Right cardiac atrium (tissue), 5 donors: ENCODE measurements at regions of chr6 and their contacts with region 1.

Region 1: GRCh38 chr6:18503593-18504231 is 116.6 kb downstream of the RNF144B start:
- DNase-seq: peak in 2 of 3 donors; percentile 26 to 71
- ATAC-seq: peak; percentile 88 to 89
- H3K4me3 ChIP-seq: peak overlapping the region; percentile 42
- H3K27ac ChIP-seq: peak overlapping the region; percentile 12
- H3K4me1 ChIP-seq: peaks cover 3% of the 10 kb centered on the region
- H3K27me3 ChIP-seq: no peaks in the 10 kb centered on the region

Region 2: GRCh38 chr6:18323935-18324705 is 179.6 kb before region 1 on chr6:
- intact Hi-C with region 1: loop called (anchors 2 to 5 kb)
- DNase-seq: no peak
- ATAC-seq: peak; percentile 64 to 80
- H3K4me3 ChIP-seq: no peak overlapping the region
- H3K27ac ChIP-seq: no peak overlapping the region
- H3K4me1 ChIP-seq: peaks cover 2% of the 10 kb centered on the region
- H3K27me3 ChIP-seq: no peaks in the 10 kb centered on the region

Region 3: DNA sequence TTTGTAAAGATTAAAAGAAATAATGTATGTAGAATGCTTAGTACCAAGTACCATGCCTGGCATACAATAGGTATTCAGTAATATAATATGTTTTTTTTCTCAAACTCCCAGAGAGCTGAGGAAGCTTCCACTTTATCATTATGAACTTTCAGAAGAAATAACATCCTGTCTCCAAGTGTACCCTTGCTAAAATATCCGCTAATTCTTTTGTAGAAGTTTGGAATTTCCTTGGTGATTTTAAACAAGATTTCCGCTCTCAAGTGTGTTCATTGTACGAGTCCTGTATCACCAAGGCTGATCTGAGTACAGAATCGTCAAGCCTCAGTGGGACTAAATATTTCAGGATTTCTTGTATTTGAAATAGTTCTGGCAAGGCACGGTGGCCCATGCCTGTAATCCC is 132.7 kb before region 1 on chr6:
- intact Hi-C with region 1: no loop called
- DNase-seq: no peak
- ATAC-seq: peak; percentile 61 to 75
- H3K4me3 ChIP-seq: no peak overlapping the region
- H3K27ac ChIP-seq: no peak overlapping the region
- H3K4me1 ChIP-seq: no peaks in the 10 kb centered on the region
- H3K27me3 ChIP-seq: no peaks in the 10 kb centered on the region

Region 4: DNA sequence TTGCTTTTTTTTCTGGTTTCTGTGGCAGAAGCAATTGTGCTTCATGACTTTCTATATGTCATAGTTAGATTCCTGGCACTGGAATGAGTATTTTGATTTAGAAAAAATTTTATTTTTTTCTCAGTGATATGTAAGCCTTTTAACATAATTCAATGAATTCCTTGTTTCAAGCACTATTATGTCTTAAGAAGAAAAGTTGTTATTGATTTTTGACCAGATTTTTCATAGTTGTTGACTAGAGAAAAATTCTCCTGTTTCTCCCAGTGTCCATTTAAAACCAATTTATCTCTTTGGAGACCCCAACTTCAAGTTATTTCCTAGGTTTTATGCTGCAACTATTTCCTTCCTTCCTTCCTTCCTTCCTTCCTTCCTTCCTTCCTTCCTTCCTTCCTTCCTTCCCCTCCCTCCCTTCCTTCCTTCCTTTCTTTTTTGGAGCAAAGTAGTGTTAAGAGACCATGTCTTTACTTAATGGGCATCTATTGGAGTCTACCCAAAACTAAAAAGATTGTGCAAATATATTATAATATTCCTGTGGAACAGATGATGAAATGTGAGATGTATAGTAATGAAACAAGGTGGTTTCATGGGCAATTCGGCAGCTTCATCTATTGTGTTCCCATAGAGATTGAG is 230.3 kb after region 1 on chr6:
- intact Hi-C with region 1: no loop called
- DNase-seq: no peak
- ATAC-seq: no peak
- H3K4me3 ChIP-seq: no peak overlapping the region
- H3K27ac ChIP-seq: no peak overlapping the region
- H3K4me1 ChIP-seq: no peaks in the 10 kb centered on the region
- H3K27me3 ChIP-seq: no peaks in the 10 kb centered on the region